ENCODE measurements at regions of chr17 and their contacts with region 1.

Region 1: DNA sequence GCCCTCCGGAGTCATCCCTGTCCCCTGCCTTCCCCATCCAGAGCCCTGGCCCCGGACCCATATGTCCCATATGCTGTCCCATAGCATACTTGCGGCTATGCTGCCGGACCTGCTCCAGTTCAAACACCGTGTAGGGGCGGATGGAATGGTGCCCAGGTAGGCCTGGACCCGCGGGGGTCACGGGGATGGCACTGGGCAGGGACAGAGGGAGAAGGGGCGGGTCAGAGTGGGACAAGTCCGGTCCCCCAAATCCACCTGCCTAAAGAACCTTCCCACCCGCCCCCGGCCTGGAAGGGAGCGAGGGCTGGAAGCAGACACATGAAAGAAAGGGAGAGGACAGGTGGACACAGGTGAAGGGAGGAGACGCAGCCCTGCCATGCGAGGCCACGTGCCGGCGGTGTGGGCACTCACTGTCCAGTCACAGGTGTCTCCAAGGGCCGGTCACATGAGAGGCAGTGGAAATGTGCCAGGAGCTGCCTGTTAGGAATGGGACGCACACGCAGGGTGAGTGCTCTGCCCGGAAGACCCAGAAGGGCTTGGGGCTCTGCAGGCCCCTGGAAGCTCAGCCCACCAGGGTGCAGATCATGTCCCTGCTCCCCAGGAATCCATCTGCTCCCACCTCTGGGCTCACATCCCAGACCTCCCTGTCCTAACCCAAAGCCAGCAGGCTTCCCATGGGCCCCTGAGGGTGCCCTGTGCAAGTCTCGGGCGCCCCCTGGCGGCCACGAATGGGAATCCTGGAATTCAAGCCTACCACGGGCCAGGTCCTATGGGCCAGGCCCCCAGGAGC is 14.0 kb downstream of the UBALD2 start:
- DNase-seq: peak; percentile 67 to 95 (median 85)
- ATAC-seq: peak; percentile 91
- H3K4me3 ChIP-seq: no peak overlapping the region
- H3K4me3 Mint-ChIP-seq: no peak overlapping the region
- H3K27ac ChIP-seq: no peak overlapping the region
- H3K27ac Mint-ChIP-seq: no peak overlapping the region
- H3K4me1 ChIP-seq: peaks cover 27% of the 10 kb centered on the region
- H3K4me1 Mint-ChIP-seq: peaks cover 16% of the 10 kb centered on the region
- H3K27me3 ChIP-seq: no peaks in the 10 kb centered on the region
- H3K27me3 Mint-ChIP-seq: no peaks in the 10 kb centered on the region
- CTCF ChIP-seq: peak; percentile 89

Region 2: DNA sequence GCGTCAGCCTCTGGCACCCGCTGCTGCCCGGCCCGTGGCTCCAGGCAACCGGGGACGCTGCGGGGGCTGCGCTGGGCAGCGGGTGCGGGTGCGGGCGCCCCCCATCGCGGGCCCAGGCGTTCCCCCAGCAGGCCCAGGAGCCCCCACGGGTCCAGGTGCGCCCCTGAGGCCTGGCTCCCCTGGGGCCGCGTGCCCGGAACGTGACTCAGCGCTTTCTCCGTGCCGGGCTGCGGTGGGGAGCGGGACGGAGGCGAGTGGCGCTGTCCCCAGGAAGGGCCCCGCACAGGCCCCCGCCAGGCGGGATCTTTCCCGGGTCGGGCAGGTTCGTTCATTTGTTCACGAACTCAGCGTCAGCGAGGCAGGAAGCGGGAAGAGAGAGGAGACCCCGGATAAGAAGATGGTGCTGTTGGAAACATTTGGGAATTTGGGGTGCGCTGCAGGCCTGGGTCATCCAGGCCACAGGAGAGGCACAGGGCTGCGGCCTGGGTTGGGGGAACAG is 157.2 kb before region 1 on chr17:
- CTCF ChIA-PET with region 1: interaction called, 262 read pairs
- POLR2A ChIA-PET with region 1: interaction called, 14 read pairs
- intact Hi-C with region 1: loop called (anchors 1 kb)
- DNase-seq: peak in 3 of 9 experiments; percentile 23 to 63 (median 48)
- ATAC-seq: peak; percentile 10
- H3K4me3 ChIP-seq: peak overlapping the region; percentile 47 to 49
- H3K4me3 Mint-ChIP-seq: peak overlapping the region; percentile 37
- H3K27ac ChIP-seq: peak overlapping the region in 1 of 2 experiments; percentile 27
- H3K27ac Mint-ChIP-seq: no peak overlapping the region
- H3K4me1 ChIP-seq: peaks cover 33% of the 10 kb centered on the region
- H3K4me1 Mint-ChIP-seq: peaks cover 20% of the 10 kb centered on the region
- H3K27me3 ChIP-seq: no peaks in the 10 kb centered on the region
- H3K27me3 Mint-ChIP-seq: no peaks in the 10 kb centered on the region
- CTCF ChIP-seq: no peak

Region 3: DNA sequence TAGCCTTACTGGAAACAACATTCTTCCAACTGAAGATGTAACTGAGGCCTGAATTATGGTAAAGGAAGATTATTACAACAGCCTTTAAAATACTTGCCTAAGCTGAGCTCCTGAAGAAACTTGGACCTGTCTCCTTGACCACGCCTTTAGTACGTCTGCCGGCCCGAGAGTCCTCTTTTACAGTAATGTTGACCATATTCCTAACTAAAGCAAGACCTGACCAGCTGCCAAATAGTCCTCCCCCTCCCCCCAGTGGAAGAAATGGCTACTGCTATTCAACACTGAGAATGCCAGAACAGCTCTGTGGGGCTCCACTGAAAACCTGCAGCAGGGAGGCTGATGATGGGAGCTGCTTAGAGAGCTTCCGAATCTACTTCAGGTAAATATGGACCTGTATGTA is 125.5 kb before region 1 on chr17:
- CTCF ChIA-PET with region 1: interaction called, 22 read pairs
- POLR2A ChIA-PET with region 1: no interaction called
- intact Hi-C with region 1: no loop called
- DNase-seq: peak in 1 of 9 experiments; percentile 43
- ATAC-seq: no peak
- H3K4me3 ChIP-seq: no peak overlapping the region
- H3K4me3 Mint-ChIP-seq: no peak overlapping the region
- H3K27ac ChIP-seq: peak overlapping the region in 1 of 2 experiments; percentile 49
- H3K27ac Mint-ChIP-seq: peak overlapping the region; percentile 99
- H3K4me1 ChIP-seq: peaks cover 52% of the 10 kb centered on the region
- H3K4me1 Mint-ChIP-seq: peaks cover 69% of the 10 kb centered on the region
- H3K27me3 ChIP-seq: no peaks in the 10 kb centered on the region
- H3K27me3 Mint-ChIP-seq: no peaks in the 10 kb centered on the region
- CTCF ChIP-seq: no peak

Region 4: DNA sequence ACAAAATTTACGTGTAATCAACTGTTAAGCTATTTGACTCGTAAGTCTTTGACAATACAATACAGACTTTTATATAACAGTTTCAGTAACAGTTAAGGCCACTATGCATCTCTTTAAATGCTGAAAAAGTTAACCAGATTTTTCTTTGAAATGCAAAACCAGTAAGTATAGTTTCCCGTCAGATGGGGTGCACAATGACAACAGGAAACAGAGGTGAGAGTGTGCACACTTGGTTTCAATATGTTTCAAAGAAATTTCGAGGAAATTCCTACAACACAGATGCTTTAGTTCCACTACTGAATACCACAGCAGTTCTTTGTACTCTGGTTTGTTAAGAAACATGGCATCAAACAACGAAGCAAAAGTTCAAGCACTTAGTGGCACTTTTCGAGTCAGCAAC is 87.3 kb before region 1 on chr17:
- CTCF ChIA-PET with region 1: interaction called, 86 read pairs
- POLR2A ChIA-PET with region 1: interaction called, 4 read pairs
- intact Hi-C with region 1: no loop called
- DNase-seq: peak in 5 of 9 experiments; percentile 32 to 89 (median 69)
- ATAC-seq: peak; percentile 80
- H3K4me3 ChIP-seq: peak overlapping the region; percentile 18 to 23
- H3K4me3 Mint-ChIP-seq: peak overlapping the region; percentile 65
- H3K27ac ChIP-seq: peak overlapping the region; percentile 59 to 60
- H3K27ac Mint-ChIP-seq: peak overlapping the region; percentile 94
- H3K4me1 ChIP-seq: peaks cover 93% of the 10 kb centered on the region
- H3K4me1 Mint-ChIP-seq: peaks cover 81% of the 10 kb centered on the region
- H3K27me3 ChIP-seq: no peaks in the 10 kb centered on the region
- H3K27me3 Mint-ChIP-seq: no peaks in the 10 kb centered on the region
- CTCF ChIP-seq: no peak

Region 5: DNA sequence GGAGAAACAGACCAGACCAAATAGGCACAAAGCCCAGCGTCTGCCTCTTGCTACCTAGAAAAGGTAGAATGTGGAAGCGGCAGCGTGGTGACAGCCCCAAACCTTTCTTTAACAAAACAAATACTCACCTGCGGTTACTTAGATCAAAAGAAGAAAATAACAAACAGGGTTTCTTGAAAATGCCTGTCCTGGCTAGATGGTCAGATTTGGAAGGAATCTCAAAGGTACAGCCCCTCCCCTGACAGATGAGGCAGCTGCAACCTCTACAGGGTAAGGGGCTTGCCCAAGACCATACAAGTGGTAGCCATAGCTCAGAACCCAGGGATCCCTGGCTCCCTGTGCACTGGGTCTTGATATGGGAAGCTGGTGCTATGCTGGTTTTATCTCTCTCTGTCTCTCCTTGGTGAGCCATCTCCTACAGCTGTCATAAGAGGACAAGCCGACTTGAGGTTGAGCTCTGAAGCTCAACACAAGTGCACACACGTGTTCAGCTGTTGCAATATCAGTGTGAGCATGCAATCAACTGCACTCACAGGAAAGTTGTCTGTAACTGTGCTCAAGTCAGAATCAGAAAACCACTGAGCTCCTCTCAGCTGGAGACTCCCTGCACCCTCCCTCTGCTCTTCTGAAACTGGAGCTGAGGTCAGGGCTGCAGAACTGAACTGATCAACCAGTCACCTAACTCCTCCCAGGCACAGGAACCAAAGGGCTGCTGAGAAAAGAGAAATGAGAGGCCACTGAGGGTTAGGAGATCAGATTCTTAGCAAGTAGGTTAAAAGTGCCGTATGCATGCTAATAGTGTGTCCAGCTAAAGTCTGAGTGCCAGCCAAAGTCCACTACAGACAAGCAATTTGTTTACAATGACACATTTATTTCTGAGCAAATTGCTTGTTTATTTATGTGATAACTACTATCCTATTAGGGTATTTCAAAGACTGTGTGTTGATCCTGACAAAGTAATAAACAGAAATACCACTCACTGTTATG is 32.8 kb before region 1 on chr17:
- CTCF ChIA-PET with region 1: interaction called, 32 read pairs
- POLR2A ChIA-PET with region 1: interaction called, 7 read pairs
- intact Hi-C with region 1: no loop called
- DNase-seq: peak in 6 of 9 experiments; percentile 34 to 71 (median 47)
- ATAC-seq: peak; percentile 86
- H3K4me3 ChIP-seq: no peak overlapping the region
- H3K4me3 Mint-ChIP-seq: peak overlapping the region; percentile 48
- H3K27ac ChIP-seq: peak overlapping the region; percentile 5 to 27
- H3K27ac Mint-ChIP-seq: peak overlapping the region; percentile 90
- H3K4me1 ChIP-seq: peaks cover 56% of the 10 kb centered on the region
- H3K4me1 Mint-ChIP-seq: peaks cover 59% of the 10 kb centered on the region
- H3K27me3 ChIP-seq: no peaks in the 10 kb centered on the region
- H3K27me3 Mint-ChIP-seq: no peaks in the 10 kb centered on the region
- CTCF ChIP-seq: no peak

Region 6: GRCh38 chr17:76296186-76296585 is 17.0 kb after region 1 on chr17:
- CTCF ChIA-PET with region 1: interaction called, 43 read pairs
- POLR2A ChIA-PET with region 1: no interaction called
- intact Hi-C with region 1: no loop called
- DNase-seq: no peak
- ATAC-seq: no peak
- H3K4me3 ChIP-seq: no peak overlapping the region
- H3K4me3 Mint-ChIP-seq: no peak overlapping the region
- H3K27ac ChIP-seq: no peak overlapping the region
- H3K27ac Mint-ChIP-seq: no peak overlapping the region
- H3K4me1 ChIP-seq: no peaks in the 10 kb centered on the region
- H3K4me1 Mint-ChIP-seq: peaks cover 1% of the 10 kb centered on the region
- H3K27me3 ChIP-seq: no peaks in the 10 kb centered on the region
- H3K27me3 Mint-ChIP-seq: no peaks in the 10 kb centered on the region
- CTCF ChIP-seq: no peak

Region 7: GRCh38 chr17:76421044-76421407 is 141.9 kb after region 1 on chr17:
- CTCF ChIA-PET with region 1: no interaction called
- POLR2A ChIA-PET with region 1: no interaction called
- intact Hi-C with region 1: no loop called
- DNase-seq: no peak
- ATAC-seq: no peak
- H3K4me3 ChIP-seq: no peak overlapping the region
- H3K4me3 Mint-ChIP-seq: no peak overlapping the region
- H3K27ac ChIP-seq: no peak overlapping the region
- H3K27ac Mint-ChIP-seq: no peak overlapping the region
- H3K4me1 ChIP-seq: no peaks in the 10 kb centered on the region
- H3K4me1 Mint-ChIP-seq: peaks cover 24% of the 10 kb centered on the region
- H3K27me3 ChIP-seq: no peaks in the 10 kb centered on the region
- H3K27me3 Mint-ChIP-seq: no peaks in the 10 kb centered on the region
- CTCF ChIP-seq: no peak

Region 8: DNA sequence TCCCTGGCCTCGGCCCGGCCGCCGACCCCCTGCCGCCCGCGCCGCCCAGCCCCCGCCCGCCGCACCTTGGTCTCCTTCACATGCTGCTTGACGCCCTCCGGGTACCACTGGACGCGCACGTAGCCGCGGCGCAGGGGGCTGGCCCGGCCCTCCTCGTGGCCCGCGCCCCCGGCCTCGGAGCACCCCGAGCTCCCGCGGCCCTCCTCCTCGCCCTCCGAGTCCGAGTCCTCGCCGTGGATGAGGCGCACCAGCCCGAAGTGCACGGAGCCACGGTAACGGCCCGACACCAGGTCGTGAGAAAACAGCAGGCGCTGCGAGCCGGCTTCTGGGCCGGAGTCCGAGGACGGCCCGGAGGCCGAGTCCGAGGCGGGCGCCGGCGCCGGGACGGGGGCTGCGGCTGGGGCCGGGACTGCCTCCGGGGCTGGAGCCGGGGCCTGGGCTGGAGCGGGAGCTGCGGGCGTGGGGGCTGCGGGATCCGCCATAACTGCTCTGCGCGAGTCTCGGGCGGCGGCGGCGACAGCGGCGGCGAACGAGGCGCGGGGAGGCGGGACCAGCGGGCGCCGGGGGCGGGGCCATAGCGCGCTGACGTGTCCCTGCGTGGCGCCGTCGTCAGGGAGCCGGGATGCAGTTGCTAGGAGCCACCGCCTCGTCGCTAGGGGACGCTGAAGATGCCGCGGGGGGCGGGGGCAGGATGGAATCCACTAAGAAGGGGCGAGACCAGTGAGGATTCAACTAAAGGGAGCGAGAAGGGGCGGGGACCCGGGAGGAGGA is 173.7 kb after region 1 on chr17 and contains the start of gene UBE2O:
- CTCF ChIA-PET with region 1: no interaction called
- POLR2A ChIA-PET with region 1: no interaction called
- intact Hi-C with region 1: no loop called
- DNase-seq: peak; percentile 84 to 96 (median 94)
- ATAC-seq: peak; percentile 92
- H3K4me3 ChIP-seq: peak within 1 kb of the TSS; percentile 49 to 78
- H3K4me3 Mint-ChIP-seq: peak within 1 kb of the TSS; percentile 85
- H3K27ac ChIP-seq: peak within 1 kb of the TSS; percentile 50 to 64
- H3K27ac Mint-ChIP-seq: peak within 1 kb of the TSS; percentile 78
- H3K4me1 ChIP-seq: peaks cover 22% of the 10 kb centered on the region
- H3K4me1 Mint-ChIP-seq: peaks cover 39% of the 10 kb centered on the region
- H3K27me3 ChIP-seq: no peaks in the 10 kb centered on the region
- H3K27me3 Mint-ChIP-seq: no peaks in the 10 kb centered on the region
- CTCF ChIP-seq: peak; percentile 39
- total RNA-seq, gene UBE2O: 29.8 to 32.7 TPM

Region 9: DNA sequence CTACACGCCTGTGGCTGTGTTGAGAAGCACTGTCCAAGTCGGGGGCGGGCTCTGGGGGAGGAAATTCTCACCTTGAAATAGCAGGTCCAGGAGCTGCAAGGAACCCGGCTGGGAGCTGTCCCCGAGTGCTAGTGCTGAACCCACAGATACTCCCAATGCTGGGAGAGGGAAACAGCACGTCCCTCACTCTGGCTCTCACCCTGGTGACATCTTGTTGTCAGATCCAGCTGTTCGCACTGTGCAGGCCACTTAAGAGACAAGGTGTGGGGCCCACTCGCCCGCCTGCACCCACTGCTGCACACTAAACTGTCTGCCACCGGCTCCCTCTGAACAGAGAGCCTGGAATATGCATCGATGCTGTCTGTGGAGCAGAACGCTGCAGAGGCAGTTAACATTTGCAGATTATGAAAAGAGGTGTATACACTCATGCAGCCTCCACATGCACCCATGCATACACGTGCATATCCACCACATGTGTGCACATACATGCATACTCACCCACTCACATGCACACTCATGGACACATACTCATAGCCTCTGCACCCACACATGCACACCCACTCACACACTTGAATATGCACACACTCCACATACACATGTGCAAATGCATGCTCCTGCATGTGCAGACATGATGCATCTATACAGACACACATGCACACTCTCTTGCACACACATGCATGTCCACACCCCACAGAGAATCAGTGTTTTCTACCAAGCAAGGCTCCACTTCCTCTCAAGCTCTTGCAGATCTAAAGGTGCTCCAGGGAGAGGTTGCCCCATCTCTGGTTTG is 631.0 kb after region 1 on chr17:
- CTCF ChIA-PET with region 1: no interaction called
- POLR2A ChIA-PET with region 1: no interaction called
- intact Hi-C with region 1: no loop called
- DNase-seq: peak in 7 of 9 experiments; percentile 9 to 40 (median 30)
- ATAC-seq: peak; percentile 48
- H3K4me3 ChIP-seq: no peak overlapping the region
- H3K4me3 Mint-ChIP-seq: no peak overlapping the region
- H3K27ac ChIP-seq: no peak overlapping the region
- H3K27ac Mint-ChIP-seq: no peak overlapping the region
- H3K4me1 ChIP-seq: no peaks in the 10 kb centered on the region
- H3K4me1 Mint-ChIP-seq: no peaks in the 10 kb centered on the region
- H3K27me3 ChIP-seq: no peaks in the 10 kb centered on the region
- H3K27me3 Mint-ChIP-seq: peaks cover 10% of the 10 kb centered on the region
- CTCF ChIP-seq: no peak

Region 10: GRCh38 chr17:78241277-78242023 is 1962.3 kb after region 1 on chr17:
- CTCF ChIA-PET with region 1: no interaction called
- POLR2A ChIA-PET with region 1: no interaction called
- intact Hi-C with region 1: no loop called
- DNase-seq: no peak
- ATAC-seq: no peak
- H3K4me3 ChIP-seq: no peak overlapping the region
- H3K4me3 Mint-ChIP-seq: no peak overlapping the region
- H3K27ac ChIP-seq: no peak overlapping the region
- H3K27ac Mint-ChIP-seq: no peak overlapping the region
- H3K4me1 ChIP-seq: no peaks in the 10 kb centered on the region
- H3K4me1 Mint-ChIP-seq: peaks cover 1% of the 10 kb centered on the region
- H3K27me3 ChIP-seq: no peaks in the 10 kb centered on the region
- H3K27me3 Mint-ChIP-seq: no peaks in the 10 kb centered on the region
- CTCF ChIP-seq: no peak

Measured in CD8-positive, alpha-beta T cell (primary cell).